HEK293 (cell line): ENCODE measurements at regions of chr2 and their contacts with region 1.

Region 1: DNA sequence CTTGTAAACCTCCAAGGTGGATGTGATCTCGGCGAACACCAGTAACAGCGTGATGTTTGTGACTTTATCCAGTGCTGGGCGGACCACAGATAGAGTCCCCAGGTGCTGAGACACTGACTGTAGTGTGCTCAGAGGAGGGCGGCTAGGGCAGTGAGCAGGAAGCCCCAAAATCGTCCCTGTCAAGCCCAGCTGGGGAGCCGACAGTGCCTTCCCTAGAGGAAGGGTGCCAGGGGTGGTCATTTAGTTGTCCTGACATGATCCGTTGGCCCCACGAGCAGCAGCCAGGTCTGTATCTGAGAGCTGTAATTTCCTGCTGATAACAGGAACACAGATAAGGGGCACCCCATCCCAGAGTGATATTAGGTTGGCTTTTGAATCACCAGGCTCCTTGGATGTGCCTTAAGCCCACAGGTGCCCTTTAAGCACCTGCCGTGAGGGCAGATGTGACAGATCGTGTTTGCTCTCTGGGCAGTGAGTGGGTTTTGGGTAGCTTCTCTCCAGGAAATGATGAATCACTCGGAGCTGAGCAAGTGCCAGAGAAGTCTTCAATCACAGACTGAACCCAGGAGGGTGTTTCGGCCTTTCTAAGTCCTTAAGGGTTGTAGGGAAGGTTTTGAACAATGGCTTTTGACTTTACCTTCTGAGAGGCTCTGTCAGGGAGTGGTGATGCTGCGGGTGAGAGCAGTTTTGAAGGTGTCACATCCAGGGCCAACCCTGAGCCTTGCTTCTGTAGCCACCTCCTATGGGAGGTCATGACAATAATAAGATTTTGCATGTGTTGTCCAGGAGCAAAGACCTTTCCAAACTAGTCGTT is 7.7 kb downstream of the LPIN1 start:
- H3K4me3 ChIP-seq: no peak overlapping the region
- H3K27ac ChIP-seq: peak overlapping the region; percentile 3; the same call in 1 of the 2 replicates
- H3K4me1 ChIP-seq: peaks cover 26% of the 10 kb centered on the region
- CTCF ChIP-seq: no peak

Region 2: GRCh38 chr2:11738589-11739436 is 15.3 kb before region 1 on chr2:
- CTCF ChIA-PET with region 1: interaction called, 23 read pairs
- POLR2A ChIA-PET with region 1: interaction called, 8 read pairs
- H3K4me3 ChIP-seq: no peak overlapping the region
- H3K27ac ChIP-seq: no peak overlapping the region
- H3K4me1 ChIP-seq: no peaks in the 10 kb centered on the region
- CTCF ChIP-seq: peak; percentile 74

Region 3: GRCh38 chr2:11743846-11744553 is 10.1 kb before region 1 on chr2:
- CTCF ChIA-PET with region 1: interaction called, 23 read pairs
- POLR2A ChIA-PET with region 1: interaction called, 8 read pairs
- H3K4me3 ChIP-seq: no peak overlapping the region
- H3K27ac ChIP-seq: peak overlapping the region; percentile 7; the same call in 1 of the 2 replicates
- H3K4me1 ChIP-seq: 0 out of 2 replicates have a peak, but pooled peaks cover 5% of the 10 kb centered on the region
- CTCF ChIP-seq: no peak